MCF 10A (cell line): ENCODE measurements at regions of chrX and their contacts with region 1.

Region 1: DNA sequence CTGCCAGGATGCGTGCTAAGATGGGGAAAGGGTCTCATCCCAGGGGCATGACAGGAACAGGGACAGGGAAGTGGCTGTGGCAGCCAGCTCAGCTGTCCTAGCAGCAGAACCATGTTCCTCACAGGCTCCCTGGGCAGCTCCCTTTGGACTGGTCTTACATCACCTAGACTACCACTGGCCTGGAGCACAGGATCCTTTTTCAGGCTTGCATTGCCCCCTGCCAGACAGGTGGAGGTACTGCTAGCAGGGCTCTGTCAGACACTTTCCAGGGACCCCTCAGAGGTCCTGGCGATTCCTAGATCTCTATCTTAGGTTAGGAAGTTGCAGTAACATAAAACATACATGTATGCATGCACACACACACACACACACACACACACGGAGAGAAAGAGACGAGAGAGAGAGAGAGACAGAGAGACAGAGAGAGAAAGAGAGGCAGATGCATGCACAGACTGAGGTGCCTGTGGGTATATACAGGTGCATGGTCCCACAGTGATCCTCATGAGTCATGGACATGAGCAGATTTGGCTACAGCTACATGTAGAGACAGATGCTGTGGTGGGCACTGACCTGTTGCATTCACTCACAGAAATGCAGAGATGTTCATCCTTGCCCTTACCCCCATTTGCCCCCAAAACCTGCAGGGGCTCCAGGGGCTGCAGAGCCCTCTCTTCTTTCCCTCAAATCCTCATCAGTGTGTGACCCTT is 63.6 kb downstream of the STARD8 start:
- DNase-seq: peak; percentile 59
- H3K4me3 Mint-ChIP-seq: no peak overlapping the region
- H3K27ac Mint-ChIP-seq: no peak overlapping the region
- H3K4me1 Mint-ChIP-seq: no peaks in the 10 kb centered on the region
- H3K27me3 Mint-ChIP-seq: peaks cover 55% of the 10 kb centered on the region
- CTCF ChIP-seq: peak; percentile 72

Region 2: DNA sequence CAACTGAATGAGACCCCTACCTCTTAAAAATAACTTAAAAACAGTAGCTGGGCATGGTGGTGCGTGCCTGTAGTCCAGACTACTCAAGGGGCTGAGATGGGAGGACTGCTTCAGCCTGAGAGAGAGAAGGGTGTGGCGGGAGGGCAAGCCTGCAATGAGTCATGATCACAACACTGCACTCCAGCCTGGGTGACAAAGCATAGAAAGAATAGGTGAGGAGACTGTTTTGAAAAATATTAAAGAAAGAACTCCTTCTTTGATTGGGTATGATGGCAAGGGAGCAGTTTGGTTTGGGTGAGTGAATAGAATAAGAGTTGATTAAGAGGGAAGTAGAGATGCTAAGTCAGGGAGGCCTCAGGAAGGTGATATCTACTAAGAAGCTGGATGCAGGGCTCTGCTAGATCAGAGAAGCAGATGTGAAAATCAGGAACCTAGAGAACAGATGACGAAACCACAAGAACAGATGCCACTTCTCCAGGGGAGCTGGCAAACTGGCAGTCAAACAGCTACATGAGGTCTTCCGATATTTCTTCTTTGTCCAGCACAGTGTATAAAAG is 596.4 kb before region 1 on chrX:
- CTCF ChIA-PET with region 1: no interaction called
- POLR2A ChIA-PET with region 1: no interaction called
- intact Hi-C with region 1: no loop called
- DNase-seq: peak; percentile 47
- H3K4me3 Mint-ChIP-seq: no peak overlapping the region
- H3K27ac Mint-ChIP-seq: no peak overlapping the region
- H3K4me1 Mint-ChIP-seq: peaks cover 6% of the 10 kb centered on the region
- H3K27me3 Mint-ChIP-seq: no peaks in the 10 kb centered on the region
- CTCF ChIP-seq: no peak

Region 3: GRCh38 chrX:68532831-68533533 is 178.0 kb before region 1 on chrX:
- CTCF ChIA-PET with region 1: interaction called, 11 read pairs
- POLR2A ChIA-PET with region 1: no interaction called
- intact Hi-C with region 1: no loop called
- DNase-seq: no peak
- H3K4me3 Mint-ChIP-seq: no peak overlapping the region
- H3K27ac Mint-ChIP-seq: no peak overlapping the region
- H3K4me1 Mint-ChIP-seq: no peaks in the 10 kb centered on the region
- H3K27me3 Mint-ChIP-seq: peaks cover 17% of the 10 kb centered on the region
- CTCF ChIP-seq: no peak

Region 4: GRCh38 chrX:68699960-68700746 is 10.9 kb before region 1 on chrX:
- CTCF ChIA-PET with region 1: interaction called, 11 read pairs
- POLR2A ChIA-PET with region 1: no interaction called
- intact Hi-C with region 1: no loop called
- DNase-seq: peak; percentile 30
- H3K4me3 Mint-ChIP-seq: no peak overlapping the region
- H3K27ac Mint-ChIP-seq: no peak overlapping the region
- H3K4me1 Mint-ChIP-seq: no peaks in the 10 kb centered on the region
- H3K27me3 Mint-ChIP-seq: peaks cover 63% of the 10 kb centered on the region
- CTCF ChIP-seq: no peak

Region 5: DNA sequence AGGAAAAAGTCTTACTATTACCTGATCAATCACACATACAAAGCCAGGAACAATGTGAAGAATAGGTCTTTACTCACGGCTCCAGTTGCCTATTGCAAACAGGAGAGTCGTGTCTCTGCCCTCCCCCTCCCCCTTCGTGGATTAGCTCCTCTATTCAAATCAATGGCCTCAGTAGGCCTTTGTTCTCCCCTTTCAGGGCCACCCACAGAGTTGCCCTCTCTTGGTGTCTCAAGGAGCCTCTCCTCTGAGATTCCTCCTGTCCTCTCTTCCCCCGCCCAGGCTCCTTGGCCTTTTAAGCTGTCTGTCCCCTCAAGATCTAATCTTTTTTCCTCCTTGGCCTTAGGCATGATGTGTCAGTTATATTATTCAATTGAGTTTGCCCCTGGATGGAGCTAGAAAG is 685.9 kb after region 1 on chrX:
- CTCF ChIA-PET with region 1: no interaction called
- POLR2A ChIA-PET with region 1: no interaction called
- intact Hi-C with region 1: no loop called
- DNase-seq: no peak
- H3K4me3 Mint-ChIP-seq: no peak overlapping the region
- H3K27ac Mint-ChIP-seq: no peak overlapping the region
- H3K4me1 Mint-ChIP-seq: no peaks in the 10 kb centered on the region
- H3K27me3 Mint-ChIP-seq: peaks cover 95% of the 10 kb centered on the region
- CTCF ChIP-seq: no peak